GM13977 (cell line): ENCODE measurements at regions of chr1 and their contacts with region 1.

Region 1: DNA sequence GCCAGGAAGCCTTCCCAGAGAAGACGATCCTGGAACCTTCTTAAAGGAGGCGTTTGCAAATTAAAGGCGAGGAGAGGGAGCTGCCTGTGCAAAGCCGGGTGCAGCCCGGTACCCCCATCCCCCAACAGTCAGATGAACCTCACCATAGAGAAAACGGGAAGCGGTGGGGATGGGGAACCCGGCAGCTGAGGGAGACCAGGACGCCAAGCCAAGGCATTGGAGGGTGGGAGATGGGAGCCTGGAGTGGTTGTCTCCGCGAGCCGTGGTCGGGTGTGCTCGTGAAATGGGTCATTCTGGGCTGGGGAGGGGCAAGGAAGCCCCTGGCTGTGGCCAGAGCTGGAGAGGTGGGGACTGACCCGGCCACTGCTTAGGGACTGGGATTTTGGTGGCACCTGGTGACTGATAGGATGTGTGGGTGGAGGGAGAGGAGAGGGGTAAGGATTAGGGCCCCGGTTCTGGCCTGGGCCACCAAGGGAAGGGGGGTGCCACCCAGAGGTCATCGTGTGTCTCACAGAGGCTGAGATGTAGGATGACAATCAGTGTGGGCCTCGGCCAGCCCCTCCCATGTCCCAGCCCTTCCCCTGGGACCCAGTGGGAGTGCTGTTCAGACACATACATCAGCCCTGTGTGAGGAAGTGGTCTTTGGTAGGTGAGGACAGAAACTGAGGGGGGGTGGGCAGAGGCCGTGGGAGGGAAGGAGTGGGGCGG is 676 bp upstream of the PADI2 start:
- DNase-seq: peak; percentile 77
- CTCF ChIP-seq: peak; percentile 19

Region 2: GRCh38 chr1:17236779-17237560 is 117.0 kb after region 1 on chr1:
- in situ Hi-C with region 1: loop called (anchors 5 kb)
- DNase-seq: peak; percentile 91
- CTCF ChIP-seq: peak; percentile 93

Region 3: DNA sequence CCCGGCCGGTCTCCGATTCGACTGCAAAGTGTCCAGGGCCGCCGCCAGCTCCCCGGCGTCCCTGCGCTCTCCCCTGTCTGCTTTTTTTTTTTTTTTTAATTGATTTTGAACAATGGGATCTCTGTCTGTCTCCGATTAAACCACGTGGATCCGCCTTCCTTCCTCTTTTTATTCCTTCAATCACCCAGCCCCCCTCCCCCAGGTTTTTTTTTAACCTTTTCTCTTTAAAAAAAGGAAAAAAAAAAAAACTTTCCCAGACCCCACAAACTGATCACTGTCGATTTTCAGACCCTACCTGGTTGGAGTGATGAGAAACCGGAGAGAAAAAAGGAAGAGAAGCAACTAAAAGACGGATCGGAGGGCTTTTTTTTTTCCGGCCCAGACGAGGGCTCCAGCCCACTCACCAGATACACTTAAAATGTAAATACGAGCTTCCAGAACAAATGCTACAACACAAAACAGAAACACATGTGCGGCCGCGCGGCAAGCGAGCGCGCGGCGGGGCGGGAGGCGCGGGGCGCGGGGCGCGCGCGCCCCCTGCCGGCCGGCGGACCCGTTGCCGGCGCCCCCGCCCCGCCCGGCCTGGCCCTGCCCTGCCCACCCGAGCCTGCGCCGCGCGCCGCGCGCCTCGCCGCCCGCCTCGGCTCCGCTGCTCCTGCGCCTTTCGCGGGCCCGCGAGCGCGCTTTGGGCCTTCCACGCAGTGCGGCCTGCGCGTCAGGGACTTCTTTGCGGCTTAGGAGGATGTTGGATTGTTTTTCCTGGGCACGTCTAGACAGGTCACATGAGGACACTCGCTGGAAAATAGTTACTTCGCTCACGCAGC is 319.5 kb after region 1 on chr1 and contains the start of gene RCC2:
- in situ Hi-C with region 1: no loop called
- DNase-seq: peak; percentile 94
- CTCF ChIP-seq: peak; percentile 39